ENCODE measurements at regions of chr2 and their contacts with region 1.

Region 1: GRCh38 chr2:109715313-109715805 is 78.7 kb upstream of the RGPD5 start:
- DNase-seq: peak; percentile 61
- H3K4me3 ChIP-seq: no peak overlapping the region
- H3K27ac ChIP-seq: no peak overlapping the region
- H3K4me1 ChIP-seq: no peaks in the 10 kb centered on the region
- H3K27me3 ChIP-seq: no peaks in the 10 kb centered on the region
- CTCF ChIP-seq: peak; percentile 70

Region 2: GRCh38 chr2:109368798-109369197 is 346.6 kb before region 1 on chr2:
- intact Hi-C with region 1: no loop called
- DNase-seq: peak; percentile 14
- H3K4me3 ChIP-seq: no peak overlapping the region
- H3K27ac ChIP-seq: no peak overlapping the region
- H3K4me1 ChIP-seq: no peaks in the 10 kb centered on the region
- H3K27me3 ChIP-seq: no peaks in the 10 kb centered on the region
- CTCF ChIP-seq: no peak

Region 3: DNA sequence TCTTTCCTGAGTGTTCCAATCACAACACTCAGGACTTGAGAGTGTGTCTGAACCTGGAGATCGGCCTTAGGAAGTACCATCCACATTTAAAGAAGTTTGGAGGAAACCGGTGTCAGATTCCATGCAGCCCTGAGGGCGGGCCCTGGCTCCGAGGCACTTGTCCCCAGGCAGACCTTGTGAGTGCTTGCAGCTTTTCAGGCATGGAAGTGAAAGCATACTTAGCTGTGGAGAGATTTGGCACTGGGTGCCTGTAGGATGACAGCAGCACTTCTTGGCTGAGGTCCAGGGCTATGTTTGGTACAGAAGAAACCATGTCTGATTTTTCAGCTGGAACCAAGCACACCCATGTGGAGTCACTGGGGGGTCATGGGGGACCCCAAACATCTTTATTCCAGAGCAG is 332.4 kb before region 1 on chr2:
- intact Hi-C with region 1: no loop called
- DNase-seq: no peak
- H3K4me3 ChIP-seq: no peak overlapping the region
- H3K27ac ChIP-seq: no peak overlapping the region
- H3K4me1 ChIP-seq: no peaks in the 10 kb centered on the region
- H3K27me3 ChIP-seq: no peaks in the 10 kb centered on the region
- CTCF ChIP-seq: no peak

Region 4: GRCh38 chr2:109545828-109546713 is 169.3 kb before region 1 on chr2:
- intact Hi-C with region 1: loop called (anchors 10 kb)
- DNase-seq: peak; percentile 73
- H3K4me3 ChIP-seq: no peak overlapping the region
- H3K27ac ChIP-seq: no peak overlapping the region
- H3K4me1 ChIP-seq: no peaks in the 10 kb centered on the region
- H3K27me3 ChIP-seq: no peaks in the 10 kb centered on the region
- CTCF ChIP-seq: peak; percentile 71

Region 5: GRCh38 chr2:109613922-109614714 is 101.2 kb before region 1 on chr2 and contains the starts of genes SEPTIN10 and SOWAHC:
- intact Hi-C with region 1: loop called (anchors 5 kb)
- DNase-seq: peak; percentile 94
- H3K4me3 ChIP-seq: peak within 1 kb of the TSS; percentile 64
- H3K27ac ChIP-seq: peak within 1 kb of the TSS; percentile 94
- H3K4me1 ChIP-seq: peaks cover 3% of the 10 kb centered on the region
- H3K27me3 ChIP-seq: no peaks in the 10 kb centered on the region
- CTCF ChIP-seq: no peak
- total RNA-seq, gene SEPTIN10: 41.5 to 69.8 TPM
- total RNA-seq, gene SOWAHC: 22.1 to 35.7 TPM